ENCODE measurements at regions of chr7 and their contacts with region 1.

Region 1: DNA sequence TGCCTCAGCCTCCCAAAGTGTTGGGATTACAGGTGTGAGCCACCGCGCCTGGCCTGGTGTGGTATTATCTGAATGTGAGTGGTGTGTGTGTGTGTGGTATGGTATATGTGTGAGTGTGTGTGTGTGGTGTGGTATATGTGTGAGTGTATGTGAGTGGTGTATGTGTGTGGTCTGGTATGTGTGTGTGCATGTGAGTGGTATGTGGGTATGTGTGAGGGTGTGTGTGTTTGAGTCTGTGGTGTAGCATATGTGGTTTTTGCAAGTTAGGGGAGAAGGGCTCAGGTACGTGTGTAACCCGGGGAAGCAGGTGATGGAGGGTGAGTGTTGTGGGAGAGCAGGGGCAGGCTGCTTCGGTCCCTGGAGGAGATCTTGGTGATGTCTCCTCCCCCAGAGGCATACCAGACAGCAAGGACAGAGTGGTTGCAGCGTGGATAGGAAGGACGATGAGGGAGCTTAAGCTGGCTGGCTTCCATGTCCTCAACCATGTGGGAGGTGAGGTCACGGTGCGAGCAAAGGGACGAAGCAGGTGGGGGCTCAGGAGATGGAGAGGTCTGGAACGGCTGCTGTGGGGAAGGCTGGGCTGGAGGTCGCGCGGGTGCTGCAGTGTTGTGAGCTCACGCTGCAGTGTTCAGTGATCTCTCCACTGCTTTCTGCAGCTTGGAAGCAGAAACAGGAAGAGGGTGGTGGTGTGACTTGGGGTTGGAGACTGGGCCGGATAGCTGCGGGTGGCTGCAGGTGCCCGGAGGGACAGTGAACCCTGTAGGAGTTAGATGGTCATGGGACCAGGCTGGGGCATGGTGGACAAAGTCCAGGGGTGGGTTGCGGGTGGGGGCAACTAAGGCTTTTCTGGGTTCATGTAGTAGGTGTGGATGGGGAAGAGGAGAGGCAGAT is 5.0 kb downstream of the ZYX start:
- DNase-seq: peak in 8 of 9 experiments; percentile 33 to 83 (median 56)
- ATAC-seq: peak; percentile 52
- H3K4me3 ChIP-seq: peak overlapping the region; percentile 10 to 21
- H3K4me3 Mint-ChIP-seq: no peak overlapping the region
- H3K27ac ChIP-seq: peak overlapping the region; percentile 50 to 52
- H3K27ac Mint-ChIP-seq: no peak overlapping the region
- H3K4me1 ChIP-seq: peaks cover 60% of the 10 kb centered on the region
- H3K4me1 Mint-ChIP-seq: peaks cover 16% of the 10 kb centered on the region
- H3K27me3 ChIP-seq: no peaks in the 10 kb centered on the region
- H3K27me3 Mint-ChIP-seq: no peaks in the 10 kb centered on the region
- CTCF ChIP-seq: no peak

Region 2: GRCh38 chr7:142983825-142984224 is 402.3 kb before region 1 on chr7:
- CTCF ChIA-PET with region 1: no interaction called
- POLR2A ChIA-PET with region 1: no interaction called
- intact Hi-C with region 1: no loop called
- DNase-seq: no peak
- ATAC-seq: no peak
- H3K4me3 ChIP-seq: no peak overlapping the region
- H3K4me3 Mint-ChIP-seq: no peak overlapping the region
- H3K27ac ChIP-seq: no peak overlapping the region
- H3K27ac Mint-ChIP-seq: no peak overlapping the region
- H3K4me1 ChIP-seq: no peaks in the 10 kb centered on the region
- H3K4me1 Mint-ChIP-seq: no peaks in the 10 kb centered on the region
- H3K27me3 ChIP-seq: no peaks in the 10 kb centered on the region
- H3K27me3 Mint-ChIP-seq: peaks cover 12% of the 10 kb centered on the region
- CTCF ChIP-seq: no peak

Region 3: DNA sequence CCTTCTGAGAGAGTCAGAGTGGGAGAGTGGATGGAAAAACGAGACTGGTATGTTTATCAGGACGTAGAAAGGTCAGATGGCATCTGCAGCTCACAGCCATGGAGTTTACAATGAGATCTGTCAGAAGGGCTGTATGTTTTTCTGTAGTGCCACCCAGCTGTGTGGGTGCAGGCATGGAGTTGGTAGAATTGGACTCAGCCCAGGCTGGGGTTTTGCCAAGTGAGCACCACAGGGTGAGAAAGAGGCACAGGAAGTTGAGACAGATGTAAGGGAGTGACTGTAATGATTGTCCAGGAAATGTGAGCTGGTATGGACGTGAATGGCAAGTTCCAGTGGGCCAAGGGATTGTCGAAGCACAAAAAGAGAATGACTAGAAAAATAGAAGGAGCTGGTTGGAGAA is 14.1 kb before region 1 on chr7:
- CTCF ChIA-PET with region 1: interaction called, 20 read pairs
- POLR2A ChIA-PET with region 1: interaction called, 12 read pairs
- intact Hi-C with region 1: loop called in 1 of 2 experiments (anchors 1 kb)
- DNase-seq: peak; percentile 36 to 81 (median 71)
- ATAC-seq: peak; percentile 33
- H3K4me3 ChIP-seq: no peak overlapping the region
- H3K4me3 Mint-ChIP-seq: peak overlapping the region; percentile 24
- H3K27ac ChIP-seq: peak overlapping the region in 1 of 2 experiments; percentile 36
- H3K27ac Mint-ChIP-seq: peak overlapping the region; percentile 75
- H3K4me1 ChIP-seq: peaks cover 58% of the 10 kb centered on the region
- H3K4me1 Mint-ChIP-seq: peaks cover 55% of the 10 kb centered on the region
- H3K27me3 ChIP-seq: no peaks in the 10 kb centered on the region
- H3K27me3 Mint-ChIP-seq: no peaks in the 10 kb centered on the region
- CTCF ChIP-seq: peak; percentile 18

Measured in CD8-positive, alpha-beta T cell (primary cell).